Activated CD4-positive, alpha-beta memory T cell treated with anti-CD3 and anti-CD28 coated beads for 36 hours (primary cell): ENCODE measurements at regions of chr7 and their contacts with region 1.

Region 1: DNA sequence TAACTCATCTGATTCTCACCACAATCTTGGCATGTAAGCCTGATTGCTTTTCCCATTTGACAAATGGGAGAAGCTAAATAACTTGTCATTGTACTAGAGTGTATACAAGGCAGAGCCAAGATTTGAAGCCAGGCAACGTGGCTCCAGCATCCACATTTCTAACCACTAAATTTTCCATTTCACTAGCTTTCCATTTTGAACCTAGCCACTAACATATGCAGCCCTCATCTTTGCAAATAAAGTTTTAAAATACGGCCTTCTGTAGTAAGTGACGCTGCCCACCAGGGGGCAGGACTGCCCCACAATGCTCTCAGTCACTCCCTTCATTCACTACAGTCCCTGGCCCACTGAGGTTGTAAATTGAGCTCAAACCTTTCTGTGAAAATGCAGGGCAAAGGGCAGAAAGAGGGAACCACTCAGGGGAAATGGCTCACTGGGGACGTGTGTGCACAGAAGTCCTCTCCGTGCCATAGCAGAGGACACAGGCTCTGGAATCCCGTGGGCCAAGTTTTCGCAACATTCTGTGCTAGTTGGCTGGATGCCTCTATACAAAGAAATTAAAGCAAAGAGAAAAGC is 315.7 kb downstream of the TNS3 start:
- DNase-seq: peak; percentile 47
- H3K4me3 Mint-ChIP-seq: no peak overlapping the region
- H3K27ac Mint-ChIP-seq: no peak overlapping the region
- H3K4me1 Mint-ChIP-seq: no peaks in the 10 kb centered on the region
- H3K27me3 Mint-ChIP-seq: no peaks in the 10 kb centered on the region

Region 2: DNA sequence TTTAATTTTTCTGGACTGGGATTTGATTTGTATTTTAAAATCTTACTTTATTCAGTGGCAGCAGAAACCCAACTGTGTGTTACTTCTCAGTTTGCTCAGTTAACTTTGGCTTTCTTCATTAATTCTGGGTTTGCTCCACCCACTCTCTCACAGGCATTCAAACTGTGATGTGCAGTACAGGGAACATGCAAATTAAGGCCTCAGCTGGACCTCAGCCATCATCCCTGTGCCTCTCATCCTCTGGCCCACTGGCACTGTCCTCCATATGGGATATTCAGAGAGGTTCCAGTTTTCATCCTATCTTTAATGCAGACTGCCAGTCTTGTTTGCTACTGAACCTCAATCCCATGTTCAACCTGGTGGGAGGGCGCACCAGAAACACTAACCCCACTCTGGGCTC is 601.8 kb before region 1 on chr7:
- CTCF ChIA-PET with region 1: no interaction called
- POLR2A ChIA-PET with region 1: no interaction called
- intact Hi-C with region 1: no loop called
- DNase-seq: no peak
- H3K4me3 Mint-ChIP-seq: no peak overlapping the region
- H3K27ac Mint-ChIP-seq: no peak overlapping the region
- H3K4me1 Mint-ChIP-seq: no peaks in the 10 kb centered on the region
- H3K27me3 Mint-ChIP-seq: no peaks in the 10 kb centered on the region

Region 3: DNA sequence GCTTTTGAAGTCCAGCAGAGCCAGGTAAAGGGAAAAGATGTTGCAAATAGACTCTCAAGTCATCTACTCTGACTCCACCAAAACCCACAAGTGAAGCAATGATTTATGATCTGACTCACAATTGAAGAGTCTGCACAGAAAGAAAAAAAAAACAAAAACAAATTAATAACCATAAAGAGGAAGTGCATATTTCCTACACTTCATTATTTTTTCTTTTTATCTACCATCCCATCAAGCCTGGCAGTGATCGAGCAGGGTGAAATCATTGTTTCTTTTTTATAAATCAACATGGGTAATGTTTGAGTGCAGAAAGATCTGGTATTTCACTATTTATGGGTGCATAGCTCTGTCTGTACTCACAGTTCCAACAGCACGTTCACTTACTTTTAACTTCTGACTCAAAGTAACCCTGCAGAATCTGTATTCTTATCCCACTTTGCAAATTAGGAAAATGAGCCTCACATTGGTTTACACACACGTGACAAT is 513.3 kb before region 1 on chr7:
- CTCF ChIA-PET with region 1: no interaction called
- POLR2A ChIA-PET with region 1: no interaction called
- intact Hi-C with region 1: no loop called
- DNase-seq: no peak
- H3K4me3 Mint-ChIP-seq: no peak overlapping the region
- H3K27ac Mint-ChIP-seq: no peak overlapping the region
- H3K4me1 Mint-ChIP-seq: no peaks in the 10 kb centered on the region
- H3K27me3 Mint-ChIP-seq: no peaks in the 10 kb centered on the region

Region 4: DNA sequence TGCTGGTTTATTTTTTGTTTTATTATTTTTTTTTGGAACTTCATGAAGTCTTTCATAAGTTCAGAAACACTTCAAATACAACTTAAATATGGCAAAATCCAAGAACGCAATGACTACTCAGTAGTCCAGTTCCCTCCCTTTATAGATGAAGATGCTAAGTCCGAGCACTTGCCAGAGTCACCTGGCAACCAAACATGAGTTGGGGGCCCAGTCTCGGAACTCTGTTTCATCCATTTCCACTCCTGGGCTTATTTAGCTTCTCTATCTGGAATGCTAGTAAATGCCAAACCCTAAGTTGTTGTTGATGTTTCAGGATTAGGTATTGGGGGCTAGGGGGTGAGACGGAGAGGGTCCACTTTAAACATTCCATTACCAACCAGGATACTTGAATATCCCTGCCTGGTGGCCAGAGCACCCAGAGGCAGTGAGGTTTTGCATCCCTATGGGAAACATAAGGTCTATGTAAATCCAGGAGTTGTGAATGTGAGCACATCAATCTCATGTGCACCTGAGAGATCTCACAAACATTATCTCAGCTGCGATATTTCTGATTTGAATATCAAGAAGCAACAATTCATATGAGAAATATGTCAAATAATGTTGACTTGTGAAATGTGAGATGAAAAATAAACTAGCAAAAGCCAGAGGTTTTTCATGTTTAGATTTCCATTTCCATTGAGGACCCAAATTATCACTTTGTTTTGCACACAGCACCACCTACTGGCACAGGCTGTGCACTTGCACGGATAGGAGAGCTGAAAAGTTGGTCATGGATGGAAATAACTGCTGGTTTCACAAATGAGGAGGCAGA is 552.8 kb after region 1 on chr7:
- CTCF ChIA-PET with region 1: interaction called, 13 read pairs
- POLR2A ChIA-PET with region 1: no interaction called
- intact Hi-C with region 1: no loop called
- DNase-seq: peak; percentile 56
- H3K4me3 Mint-ChIP-seq: no peak overlapping the region
- H3K27ac Mint-ChIP-seq: no peak overlapping the region
- H3K4me1 Mint-ChIP-seq: no peaks in the 10 kb centered on the region
- H3K27me3 Mint-ChIP-seq: no peaks in the 10 kb centered on the region